Activated CD4-positive, alpha-beta memory T cell treated with anti-CD3 and anti-CD28 coated beads, Interleukin-2, amount 10 ng/mL, durations not matched to agents 7 days and 5 days (primary cell): ENCODE measurements at regions of chr12 and their contacts with region 1.

Region 1: GRCh38 chr12:51874486-51874885 is 13.4 kb upstream of the ANKRD33 start:
- DNase-seq: no peak
- H3K4me3 Mint-ChIP-seq: no peak overlapping the region
- H3K27ac Mint-ChIP-seq: no peak overlapping the region
- H3K4me1 Mint-ChIP-seq: no peaks in the 10 kb centered on the region
- H3K27me3 Mint-ChIP-seq: peaks cover 18% of the 10 kb centered on the region

Region 2: DNA sequence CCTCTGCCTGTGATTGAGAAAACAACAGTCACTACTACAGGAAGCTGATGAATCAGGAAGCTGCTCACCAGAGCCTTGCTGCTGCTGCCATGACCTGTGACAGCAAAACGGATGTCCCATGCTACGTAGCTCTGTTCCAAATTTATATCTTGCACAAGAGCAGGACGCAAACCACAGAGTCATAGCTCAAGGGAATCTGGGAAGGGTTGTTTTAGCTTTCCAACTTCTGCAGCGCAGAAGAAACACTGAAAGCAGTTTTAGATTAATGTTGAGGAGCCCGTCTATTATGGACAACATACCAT is 11.5 kb after region 1 on chr12:
- CTCF ChIA-PET with region 1: interaction called, 11 read pairs
- POLR2A ChIA-PET with region 1: interaction called, 3 read pairs
- DNase-seq: peak; percentile 70
- H3K4me3 Mint-ChIP-seq: no peak overlapping the region
- H3K27ac Mint-ChIP-seq: peak overlapping the region; percentile 78
- H3K4me1 Mint-ChIP-seq: peaks cover 24% of the 10 kb centered on the region
- H3K27me3 Mint-ChIP-seq: peaks cover 2% of the 10 kb centered on the region